ENCODE measurements at regions of chr10 and their contacts with region 1.

Region 1: DNA sequence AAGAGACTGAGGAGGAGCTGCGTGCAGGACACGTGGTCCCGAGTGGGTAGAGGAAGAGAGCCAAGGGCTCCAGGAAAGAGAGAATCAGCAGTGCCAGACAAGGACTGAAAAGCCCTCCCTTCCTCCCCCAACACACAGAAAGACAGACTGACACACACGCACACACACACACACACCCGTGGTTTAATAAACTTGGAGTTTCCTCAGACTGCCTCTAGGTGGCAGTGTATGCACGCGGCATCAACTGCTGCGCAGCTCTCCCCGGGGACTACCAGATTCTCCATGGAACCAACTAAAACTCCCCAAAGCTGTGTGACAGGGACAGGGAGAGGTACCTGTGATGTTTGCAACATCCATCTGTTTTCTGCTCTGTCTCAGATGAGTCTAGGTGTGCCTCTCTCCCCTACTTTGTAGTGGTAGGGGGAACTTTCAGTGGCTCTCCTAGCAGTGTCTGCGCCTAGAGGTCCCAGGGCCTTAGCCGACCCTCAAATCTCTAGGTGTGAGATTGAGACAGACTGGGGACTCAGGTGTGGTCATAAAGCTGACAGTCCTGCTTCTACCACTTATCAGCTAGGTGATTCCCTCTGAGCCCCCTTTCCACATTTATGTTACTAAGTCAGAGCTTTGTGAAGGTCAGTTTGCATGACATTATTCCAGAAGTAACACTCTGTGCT is 9.3 kb upstream of the TSPAN14 start:
- DNase-seq: peak in 7 of 9 donors; percentile 60 to 83 (median 75)
- ATAC-seq: peak; percentile 86
- H3K4me3 ChIP-seq: no peak overlapping the region
- H3K4me3 Mint-ChIP-seq: peak overlapping the region in 9 of 10 donors; percentile 19 to 69 (median 39)
- H3K27ac ChIP-seq: no peak overlapping the region
- H3K27ac Mint-ChIP-seq: peak overlapping the region; percentile 29 to 90 (median 78)
- H3K4me1 ChIP-seq: peaks cover 0 to 39% of the 10 kb centered on the region in 2 donors
- H3K4me1 Mint-ChIP-seq: peaks cover 34 to 71% (median 55%) of the 10 kb centered on the region in 7 donors
- H3K27me3 ChIP-seq: no peaks in the 10 kb centered on the region
- H3K27me3 Mint-ChIP-seq: peaks cover 0 to 11% (median 0%) of the 10 kb centered on the region in 5 donors

Region 2: DNA sequence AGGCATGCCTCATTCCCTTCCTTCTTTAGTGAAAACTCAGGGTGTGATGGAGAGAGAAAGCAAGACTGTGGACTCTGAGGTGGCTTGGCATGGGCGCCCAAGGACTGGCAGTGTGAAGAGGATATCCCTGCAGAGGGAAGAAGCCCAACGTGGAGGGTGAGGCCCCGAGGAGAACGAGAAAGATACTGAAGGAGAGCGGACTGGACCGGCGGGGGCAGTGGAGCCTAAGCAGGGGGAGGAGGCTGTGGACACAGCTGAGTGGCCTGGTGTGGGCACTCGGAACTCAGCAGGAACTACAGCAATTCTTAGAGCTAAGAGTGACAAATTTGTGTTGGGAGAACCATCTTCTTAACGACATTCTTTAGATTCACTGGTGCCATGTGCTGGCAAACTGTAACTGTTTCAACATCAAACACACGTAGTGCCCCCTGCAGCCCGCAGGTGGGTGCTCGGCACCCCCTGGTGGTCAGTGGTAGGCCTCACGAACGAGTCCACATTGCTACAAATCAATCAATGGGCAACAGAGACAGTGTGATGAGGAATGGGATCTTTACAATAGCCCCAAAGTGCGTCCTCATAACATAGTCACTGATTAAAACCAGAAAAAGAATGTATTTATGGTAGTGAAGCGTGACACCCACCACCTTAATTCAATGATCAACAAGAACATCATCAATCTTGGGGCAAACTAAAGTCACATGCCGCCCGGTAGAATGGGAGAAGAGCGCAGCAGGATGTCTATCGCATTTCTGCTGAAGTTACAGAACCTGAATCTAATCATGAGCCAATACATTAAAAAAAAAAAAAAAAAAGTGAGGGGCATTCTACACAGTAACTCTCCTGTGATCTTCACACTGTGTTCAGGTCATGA is 836.0 kb before region 1 on chr10:
- CTCF ChIA-PET with region 1: no interaction called
- POLR2A ChIA-PET with region 1: no interaction called
- intact Hi-C with region 1: no loop called
- DNase-seq: peak in 6 of 9 donors; percentile 7 to 51 (median 15)
- ATAC-seq: peak; percentile 38
- H3K4me3 ChIP-seq: no peak overlapping the region
- H3K4me3 Mint-ChIP-seq: no peak overlapping the region
- H3K27ac ChIP-seq: no peak overlapping the region
- H3K27ac Mint-ChIP-seq: no peak overlapping the region
- H3K4me1 ChIP-seq: no peaks in the 10 kb centered on the region
- H3K4me1 Mint-ChIP-seq: no peaks in the 10 kb centered on the region
- H3K27me3 ChIP-seq: no peaks in the 10 kb centered on the region
- H3K27me3 Mint-ChIP-seq: peaks cover 4 to 12% (median 7%) of the 10 kb centered on the region in 5 donors

Region 3: GRCh38 chr10:80459047-80459931 is 14.5 kb after region 1 on chr10:
- CTCF ChIA-PET with region 1: interaction called, 63 read pairs
- POLR2A ChIA-PET with region 1: interaction called, 318 read pairs
- intact Hi-C with region 1: loop called in 1 of 2 experiments (anchors 2 kb)
- DNase-seq: peak in 7 of 9 donors; percentile 53 to 66 (median 55)
- ATAC-seq: peak; percentile 66
- H3K4me3 ChIP-seq: peak overlapping the region; percentile 87
- H3K4me3 Mint-ChIP-seq: peak overlapping the region; percentile 79 to 99 (median 98)
- H3K27ac ChIP-seq: peak overlapping the region; percentile 84
- H3K27ac Mint-ChIP-seq: peak overlapping the region; percentile 87 to 99 (median 98)
- H3K4me1 ChIP-seq: peaks cover 75 to 79% of the 10 kb centered on the region in 2 donors
- H3K4me1 Mint-ChIP-seq: peaks cover 77 to 85% (median 83%) of the 10 kb centered on the region in 7 donors
- H3K27me3 ChIP-seq: no peaks in the 10 kb centered on the region
- H3K27me3 Mint-ChIP-seq: no peaks in the 10 kb centered on the region

Region 4: GRCh38 chr10:80487791-80488538 is 43.2 kb after region 1 on chr10:
- CTCF ChIA-PET with region 1: interaction called, 11 read pairs
- POLR2A ChIA-PET with region 1: interaction called, 14 read pairs
- intact Hi-C with region 1: loop called in 1 of 2 experiments (anchors 1 kb)
- DNase-seq: peak in 8 of 9 donors; percentile 48 to 63 (median 54)
- ATAC-seq: peak; percentile 78
- H3K4me3 ChIP-seq: peak overlapping the region; percentile 49
- H3K4me3 Mint-ChIP-seq: peak overlapping the region; percentile 64 to 88 (median 80)
- H3K27ac ChIP-seq: peak overlapping the region; percentile 74
- H3K27ac Mint-ChIP-seq: peak overlapping the region; percentile 74 to 99 (median 88)
- H3K4me1 ChIP-seq: peaks cover 93 to 98% of the 10 kb centered on the region in 2 donors
- H3K4me1 Mint-ChIP-seq: peaks cover 83 to 100% (median 93%) of the 10 kb centered on the region in 7 donors
- H3K27me3 ChIP-seq: no peaks in the 10 kb centered on the region
- H3K27me3 Mint-ChIP-seq: no peaks in the 10 kb centered on the region

Region 5: DNA sequence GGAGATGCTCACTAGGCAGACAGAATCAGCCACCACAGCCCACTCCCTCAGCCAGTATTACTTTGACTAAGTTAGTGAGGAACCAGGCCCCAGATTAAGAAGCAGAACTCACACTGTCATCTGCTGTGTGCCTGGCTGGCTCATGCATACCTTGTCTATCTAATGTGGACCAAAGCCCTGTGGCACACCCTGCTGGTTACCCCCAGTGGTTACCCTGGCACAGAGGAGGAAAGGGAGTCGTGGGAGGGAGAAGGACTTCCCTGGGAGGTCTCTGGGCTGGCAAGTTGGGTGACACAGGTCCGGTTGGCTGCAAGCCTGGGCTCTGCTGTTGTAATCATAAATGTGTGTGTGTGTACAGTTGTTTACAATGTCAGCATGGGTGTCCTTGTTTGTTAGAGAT is 85.5 kb after region 1 on chr10:
- CTCF ChIA-PET with region 1: interaction called, 4 read pairs
- POLR2A ChIA-PET with region 1: interaction called, 5 read pairs
- intact Hi-C with region 1: loop called (anchors 1 kb)
- DNase-seq: peak in 6 of 9 donors; percentile 38 to 56 (median 46)
- ATAC-seq: peak; percentile 77
- H3K4me3 ChIP-seq: no peak overlapping the region
- H3K4me3 Mint-ChIP-seq: peak overlapping the region; percentile 56 to 85 (median 73)
- H3K27ac ChIP-seq: peak overlapping the region; percentile 60
- H3K27ac Mint-ChIP-seq: peak overlapping the region; percentile 88 to 97 (median 92)
- H3K4me1 ChIP-seq: peaks cover 39 to 74% of the 10 kb centered on the region in 2 donors
- H3K4me1 Mint-ChIP-seq: peaks cover 55 to 77% (median 73%) of the 10 kb centered on the region in 7 donors
- H3K27me3 ChIP-seq: no peaks in the 10 kb centered on the region
- H3K27me3 Mint-ChIP-seq: no peaks in the 10 kb centered on the region

Region 6: GRCh38 chr10:80662577-80663261 is 217.9 kb after region 1 on chr10:
- CTCF ChIA-PET with region 1: interaction called, 9 read pairs
- POLR2A ChIA-PET with region 1: interaction called, 3 read pairs
- intact Hi-C with region 1: loop called (anchors 1 to 2 kb)
- DNase-seq: peak; percentile 30 to 73 (median 58)
- ATAC-seq: peak; percentile 70
- H3K4me3 ChIP-seq: no peak overlapping the region
- H3K4me3 Mint-ChIP-seq: peak overlapping the region in 9 of 10 donors; percentile 26 to 76 (median 60)
- H3K27ac ChIP-seq: no peak overlapping the region
- H3K27ac Mint-ChIP-seq: peak overlapping the region in 1 of 9 donors; percentile 7
- H3K4me1 ChIP-seq: peaks cover 4 to 5% of the 10 kb centered on the region in 2 donors
- H3K4me1 Mint-ChIP-seq: peaks cover 4 to 10% (median 8%) of the 10 kb centered on the region in 7 donors
- H3K27me3 ChIP-seq: peaks cover 0 to 6% of the 10 kb centered on the region in 2 donors
- H3K27me3 Mint-ChIP-seq: peaks cover 7 to 22% (median 16%) of the 10 kb centered on the region in 5 donors

Measured in naive thymus-derived CD4-positive, alpha-beta T cell (primary cell).